HCT116 (cell line): ENCODE measurements at regions of chr2 and their contacts with region 1.

Region 1: DNA sequence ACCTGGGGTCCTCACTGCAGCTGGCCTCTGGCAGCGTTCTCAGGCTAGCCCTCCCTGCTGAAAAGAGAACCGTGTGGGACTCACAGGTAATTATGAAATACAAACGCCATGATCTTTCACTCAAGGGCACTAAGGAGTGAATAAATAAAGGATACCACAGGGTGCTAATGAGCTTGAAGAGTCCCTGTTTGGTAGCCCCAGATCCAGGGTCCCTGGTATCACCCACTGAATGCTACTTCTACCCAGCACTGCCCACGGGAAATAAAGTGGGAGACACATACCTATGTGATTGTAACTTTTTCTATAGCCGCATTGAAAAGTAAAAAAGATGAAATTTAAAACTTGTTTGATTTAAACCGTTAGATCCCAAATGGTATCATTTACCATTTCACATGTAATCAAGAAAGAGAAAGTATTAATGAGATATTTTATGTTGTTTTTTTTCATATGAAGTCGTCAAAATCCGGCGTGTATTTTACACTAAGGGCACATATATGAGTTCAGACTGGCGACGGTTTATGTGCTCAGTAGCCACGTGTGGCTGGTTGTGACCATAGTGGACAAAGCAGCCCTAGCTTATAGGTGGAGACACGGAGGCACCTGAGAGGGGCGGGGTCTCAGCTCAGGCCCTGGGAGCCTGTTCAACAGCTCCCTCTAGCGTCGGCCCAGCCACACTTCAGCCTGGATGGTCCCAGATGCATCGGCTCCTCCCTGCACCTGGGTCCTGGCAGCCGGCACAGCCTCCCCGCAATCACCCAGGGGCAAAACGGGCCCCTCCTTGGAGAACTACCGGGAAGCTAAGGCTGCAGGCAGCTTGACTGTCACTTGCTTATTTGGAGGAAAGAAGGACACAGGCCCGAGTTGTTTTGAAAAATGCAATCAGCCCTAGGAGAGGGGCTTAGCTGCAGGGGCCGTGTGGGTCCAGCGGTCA is 39.2 kb downstream of the ODC1 start:
- DNase-seq: peak; percentile 79
- ATAC-seq: peak; percentile 82
- H3K4me3 ChIP-seq: peak overlapping the region; percentile 12 to 40; a peak in 3 of 4 replicates
- H3K27ac ChIP-seq: peak overlapping the region; percentile 84
- H3K4me1 ChIP-seq: peaks cover 55 to 77% of the 10 kb centered on the region in 2 experiments
- H3K27me3 ChIP-seq: no peaks in the 10 kb centered on the region
- CTCF ChIP-seq: peak in 2 of 3 experiments; percentile 95 to 96; a peak in 4 of 6 replicates
- POLR2A ChIP-seq: peak; percentile 70
- RAD21 ChIP-seq: no peak

Region 2: DNA sequence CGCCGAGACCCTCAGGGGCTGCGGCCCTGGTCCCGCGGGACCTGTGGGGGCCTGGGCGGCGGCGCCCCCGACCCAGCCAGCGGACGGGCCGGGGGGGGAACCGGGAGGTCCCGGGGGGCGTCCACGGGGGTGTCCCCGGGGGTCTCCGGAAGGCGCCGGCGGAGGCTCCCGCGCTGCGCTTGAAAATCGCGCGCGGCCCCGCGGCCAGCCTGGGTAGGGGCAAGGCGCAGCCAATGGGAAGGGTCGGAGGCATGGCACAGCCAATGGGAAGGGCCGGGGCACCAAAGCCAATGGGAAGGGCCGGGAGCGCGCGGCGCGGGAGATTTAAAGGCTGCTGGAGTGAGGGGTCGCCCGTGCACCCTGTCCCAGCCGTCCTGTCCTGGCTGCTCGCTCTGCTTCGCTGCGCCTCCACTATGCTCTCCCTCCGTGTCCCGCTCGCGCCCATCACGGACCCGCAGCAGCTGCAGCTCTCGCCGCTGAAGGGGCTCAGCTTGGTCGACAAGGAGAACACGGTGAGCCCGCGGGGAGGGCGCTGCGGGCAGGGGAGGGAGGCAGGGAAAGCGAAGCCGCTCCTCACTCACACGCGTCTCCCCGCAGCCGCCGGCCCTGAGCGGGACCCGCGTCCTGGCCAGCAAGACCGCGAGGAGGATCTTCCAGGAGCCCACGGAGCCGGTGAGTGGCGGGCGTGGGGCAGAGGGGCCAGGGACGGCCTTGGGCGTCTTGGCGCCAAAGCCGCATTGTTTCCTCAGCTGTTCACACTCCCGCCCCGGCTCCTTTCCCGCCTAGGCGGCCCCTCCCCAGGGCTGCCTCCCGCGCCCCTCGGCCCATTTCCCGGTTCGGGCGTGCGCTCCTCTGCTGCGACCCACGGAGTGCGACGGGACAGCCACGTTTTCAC is 286.3 kb before region 1 on chr2 and contains the start of gene RRM2:
- CTCF ChIA-PET with region 1: interaction called, 24 read pairs
- POLR2A ChIA-PET with region 1: interaction called, 6 read pairs
- RAD21 ChIA-PET with region 1: interaction called in 1 of 2 experiments, 7 read pairs
- intact Hi-C with region 1: loop called (anchors 1 kb)
- DNase-seq: peak; percentile 91
- ATAC-seq: peak; percentile 81
- H3K4me3 ChIP-seq: peak within 1 kb of the TSS; percentile 86 to 96
- H3K27ac ChIP-seq: peak within 1 kb of the TSS; percentile 80
- H3K4me1 ChIP-seq: peaks cover 18 to 45% of the 10 kb centered on the region in 2 experiments; a peak in 3 of 4 replicates
- H3K27me3 ChIP-seq: no peaks in the 10 kb centered on the region
- CTCF ChIP-seq: no peak
- POLR2A ChIP-seq: peak; percentile 95
- RAD21 ChIP-seq: no peak
- total RNA-seq, gene RRM2: 330 TPM

Region 3: GRCh38 chr2:10157293-10157692 is 251.6 kb before region 1 on chr2:
- CTCF ChIA-PET with region 1: interaction called, 21 read pairs
- POLR2A ChIA-PET with region 1: no interaction called
- RAD21 ChIA-PET with region 1: interaction called in 1 of 2 experiments, 3 read pairs
- intact Hi-C with region 1: no loop called
- DNase-seq: no peak
- ATAC-seq: peak; percentile 56
- H3K4me3 ChIP-seq: no peak overlapping the region
- H3K27ac ChIP-seq: no peak overlapping the region
- H3K4me1 ChIP-seq: peaks cover 0 to 18% of the 10 kb centered on the region in 2 experiments; a peak in 2 of 4 replicates
- H3K27me3 ChIP-seq: no peaks in the 10 kb centered on the region
- CTCF ChIP-seq: no peak
- POLR2A ChIP-seq: no peak
- RAD21 ChIP-seq: peak; percentile 52

Region 4: DNA sequence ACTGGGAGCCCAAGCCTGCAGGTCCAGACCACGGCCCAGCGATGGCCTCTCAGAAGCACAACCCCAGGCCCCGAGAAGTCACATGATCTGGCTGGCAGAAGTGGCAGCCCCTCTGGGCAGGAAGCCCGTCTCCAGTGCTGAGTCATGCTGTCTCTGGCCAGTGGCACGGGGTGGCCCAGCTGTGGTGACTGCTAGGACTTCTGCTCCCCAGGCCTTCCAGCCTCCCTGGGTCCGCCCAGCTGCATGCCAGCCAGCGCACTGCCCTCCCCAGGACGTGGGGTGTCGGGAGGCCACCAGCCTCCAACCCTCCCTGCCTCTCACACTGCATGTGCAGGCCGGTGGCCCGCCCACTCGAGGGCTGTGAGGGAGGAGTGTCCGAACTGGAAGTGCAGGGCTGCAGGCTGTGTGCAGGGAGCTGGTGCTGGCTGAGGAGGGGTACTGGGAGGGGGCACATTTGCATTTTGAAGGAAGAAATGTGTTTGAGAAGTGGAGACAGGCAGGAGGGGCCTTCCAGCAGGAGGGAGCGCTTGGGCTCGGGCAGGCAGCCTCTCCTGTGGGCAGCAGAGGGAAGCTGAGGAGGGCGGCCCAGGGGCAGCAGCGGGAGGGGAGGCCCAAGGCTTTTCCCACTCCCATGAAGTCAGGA is 123.2 kb before region 1 on chr2:
- CTCF ChIA-PET with region 1: interaction called, 7 read pairs
- POLR2A ChIA-PET with region 1: interaction called, 14 read pairs
- RAD21 ChIA-PET with region 1: interaction called, 4 to 6 read pairs
- intact Hi-C with region 1: loop called (anchors 2 kb)
- DNase-seq: peak; percentile 71
- ATAC-seq: peak; percentile 46
- H3K4me3 ChIP-seq: peak overlapping the region in 1 of 2 experiments; percentile 21; a peak in 1 of 4 replicates
- H3K27ac ChIP-seq: peak overlapping the region; percentile 95
- H3K4me1 ChIP-seq: peaks cover 72 to 93% of the 10 kb centered on the region in 2 experiments
- H3K27me3 ChIP-seq: no peaks in the 10 kb centered on the region
- CTCF ChIP-seq: no peak
- POLR2A ChIP-seq: peak; percentile 55
- RAD21 ChIP-seq: no peak

Region 5: DNA sequence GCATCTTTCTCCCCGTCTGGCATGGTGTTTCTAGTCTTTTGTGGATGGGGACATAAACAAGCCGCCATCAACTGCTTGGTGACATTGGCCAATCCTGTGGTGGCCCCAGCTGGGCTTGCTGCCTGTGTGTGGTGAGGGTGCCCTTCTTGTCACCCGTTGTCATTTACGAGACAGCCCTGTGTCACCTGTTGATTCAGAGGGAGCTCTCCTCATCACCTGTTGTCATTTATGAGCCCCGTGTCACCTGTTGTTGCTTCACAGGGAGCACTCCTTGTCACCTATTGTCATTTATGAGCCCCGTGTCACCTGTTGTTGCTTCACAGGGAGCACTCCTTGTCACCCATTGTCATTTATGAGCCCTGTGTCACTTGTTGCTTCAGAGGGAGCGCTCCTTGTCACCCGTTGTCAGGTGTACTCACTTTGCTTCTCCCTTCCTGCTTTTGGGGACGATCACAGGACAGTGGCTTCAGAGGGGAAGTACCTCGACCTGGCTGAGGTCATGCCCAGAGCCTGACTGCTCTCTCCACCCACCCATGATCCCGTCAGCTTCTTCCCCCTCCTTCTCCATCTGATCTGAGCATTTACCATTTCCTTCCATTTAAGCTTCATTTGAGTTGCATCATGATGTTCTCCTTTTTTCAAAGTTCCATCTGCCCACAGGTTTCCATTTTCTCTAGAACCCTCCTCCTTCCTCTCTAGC is 77.1 kb before region 1 on chr2:
- CTCF ChIA-PET with region 1: interaction called, 8 read pairs
- POLR2A ChIA-PET with region 1: no interaction called
- RAD21 ChIA-PET with region 1: interaction called in 1 of 2 experiments, 3 read pairs
- intact Hi-C with region 1: loop called (anchors 2 kb)
- DNase-seq: no peak
- ATAC-seq: no peak
- H3K4me3 ChIP-seq: no peak overlapping the region; a peak in 1 of 4 replicates
- H3K27ac ChIP-seq: peak overlapping the region; percentile 53; the same call in 1 of the 2 replicates
- H3K4me1 ChIP-seq: peaks cover 46 to 63% of the 10 kb centered on the region in 2 experiments
- H3K27me3 ChIP-seq: no peaks in the 10 kb centered on the region
- CTCF ChIP-seq: no peak
- POLR2A ChIP-seq: no peak
- RAD21 ChIP-seq: no peak

Region 6: DNA sequence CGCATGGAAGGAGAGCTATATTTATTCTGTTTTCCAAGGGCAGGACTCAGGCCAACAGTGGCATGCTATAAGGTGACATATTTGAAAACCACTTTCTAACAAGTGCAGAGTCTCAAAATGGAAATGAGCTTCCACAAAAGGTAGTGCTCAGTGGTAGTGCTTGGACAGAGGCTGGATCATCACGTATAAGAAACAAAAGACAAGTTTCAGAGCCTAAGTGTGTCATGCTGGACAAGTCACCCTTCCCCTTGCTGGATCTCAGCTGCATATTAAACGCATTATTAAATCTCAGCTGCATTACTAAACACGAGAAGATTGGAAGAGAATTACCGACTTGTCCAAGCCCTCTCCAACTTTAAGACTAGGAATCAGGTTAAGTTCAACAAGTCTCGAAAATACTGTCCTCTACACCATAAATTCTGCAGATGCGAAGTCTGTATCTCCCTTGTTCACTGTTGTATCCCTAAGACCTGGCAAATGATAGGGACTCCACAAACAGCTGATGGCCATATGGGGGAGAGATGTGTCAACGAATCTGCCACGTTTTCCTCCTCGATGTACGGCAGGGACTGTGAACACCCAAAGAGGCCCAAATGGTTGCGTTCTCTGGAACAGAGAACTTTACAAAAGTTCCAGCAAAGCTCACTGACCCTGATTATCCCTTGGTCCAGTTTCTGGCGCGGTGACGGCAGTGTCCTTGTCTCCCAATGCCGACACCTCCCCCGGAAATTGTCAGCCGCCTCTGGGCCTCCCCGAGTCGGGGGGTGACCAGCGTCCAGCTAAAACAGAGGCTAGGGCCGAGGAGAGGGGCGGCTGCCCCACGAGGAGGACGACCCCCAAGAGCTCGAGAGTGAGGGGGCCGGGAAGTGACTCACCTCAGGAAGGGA is 280.2 kb after region 1 on chr2:
- CTCF ChIA-PET with region 1: no interaction called
- POLR2A ChIA-PET with region 1: no interaction called
- RAD21 ChIA-PET with region 1: no interaction called
- intact Hi-C with region 1: no loop called
- DNase-seq: no peak
- ATAC-seq: peak; percentile 21
- H3K4me3 ChIP-seq: peak overlapping the region; percentile 76 to 96
- H3K27ac ChIP-seq: peak overlapping the region; percentile 79
- H3K4me1 ChIP-seq: peaks cover 13 to 18% of the 10 kb centered on the region in 2 experiments
- H3K27me3 ChIP-seq: no peaks in the 10 kb centered on the region
- CTCF ChIP-seq: no peak
- POLR2A ChIP-seq: no peak
- RAD21 ChIP-seq: no peak

Region 7: GRCh38 chr2:11647834-11648600 is 1239.1 kb after region 1 on chr2:
- CTCF ChIA-PET with region 1: no interaction called
- POLR2A ChIA-PET with region 1: no interaction called
- RAD21 ChIA-PET with region 1: no interaction called
- intact Hi-C with region 1: no loop called
- DNase-seq: no peak
- ATAC-seq: peak; percentile 69
- H3K4me3 ChIP-seq: no peak overlapping the region
- H3K27ac ChIP-seq: no peak overlapping the region
- H3K4me1 ChIP-seq: no peaks in the 10 kb centered on the region
- H3K27me3 ChIP-seq: no peaks in the 10 kb centered on the region; the same call in 1 of the 2 replicates
- CTCF ChIP-seq: peak; percentile 39 to 41 (median 39); a peak in 4 of 6 replicates
- POLR2A ChIP-seq: no peak
- RAD21 ChIP-seq: peak; percentile 60